Aorta (tissue), 5 donors: ENCODE measurements at regions of chr21 and their contacts with region 1.

Region 1: DNA sequence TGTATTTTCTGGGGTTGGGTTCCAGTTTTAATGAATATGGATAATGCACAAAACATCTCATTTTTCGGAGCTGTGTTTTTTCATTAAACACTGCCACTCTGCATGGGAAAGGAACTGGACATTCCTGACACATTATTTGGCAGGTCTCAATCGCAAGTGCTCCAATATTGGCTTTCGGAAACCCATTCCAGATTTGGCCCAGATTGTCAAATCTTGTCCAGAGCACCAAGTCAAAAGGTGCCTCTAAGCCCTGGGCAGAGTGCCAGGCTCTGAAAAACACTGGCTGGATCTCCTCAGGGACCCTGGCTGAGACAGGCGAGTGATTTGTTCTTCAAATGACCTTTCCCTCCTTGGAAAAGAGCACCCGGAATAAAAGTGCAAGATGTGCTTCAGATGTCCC is 68.4 kb upstream of the MRPS6 start:
- DNase-seq: peak in 1 of 2 donors; percentile 66
- ATAC-seq: peak; percentile 61
- H3K4me3 ChIP-seq: no peak overlapping the region
- H3K27ac ChIP-seq: peak overlapping the region in 1 of 2 donors; percentile 48
- H3K4me1 ChIP-seq: no peaks in the 10 kb centered on the region
- H3K27me3 ChIP-seq: no peaks in the 10 kb centered on the region

Region 2: GRCh38 chr21:33858670-33859372 is 146.2 kb before region 1 on chr21:
- intact Hi-C with region 1: no loop called
- DNase-seq: peak; percentile 57 to 73
- ATAC-seq: no peak
- H3K4me3 ChIP-seq: no peak overlapping the region
- H3K27ac ChIP-seq: peak overlapping the region in 1 of 2 donors; percentile 18
- H3K4me1 ChIP-seq: no peaks in the 10 kb centered on the region
- H3K27me3 ChIP-seq: no peaks in the 10 kb centered on the region

Region 3: GRCh38 chr21:33976082-33977016 is 28.6 kb before region 1 on chr21:
- intact Hi-C with region 1: loop called in 1 of 2 experiments (anchors 1 kb)
- DNase-seq: peak in 1 of 2 donors; percentile 73
- ATAC-seq: peak; percentile 81
- H3K4me3 ChIP-seq: no peak overlapping the region
- H3K27ac ChIP-seq: peak overlapping the region; percentile 49 to 52
- H3K4me1 ChIP-seq: peaks cover 0 to 14% of the 10 kb centered on the region in 2 donors
- H3K27me3 ChIP-seq: no peaks in the 10 kb centered on the region

Region 4: DNA sequence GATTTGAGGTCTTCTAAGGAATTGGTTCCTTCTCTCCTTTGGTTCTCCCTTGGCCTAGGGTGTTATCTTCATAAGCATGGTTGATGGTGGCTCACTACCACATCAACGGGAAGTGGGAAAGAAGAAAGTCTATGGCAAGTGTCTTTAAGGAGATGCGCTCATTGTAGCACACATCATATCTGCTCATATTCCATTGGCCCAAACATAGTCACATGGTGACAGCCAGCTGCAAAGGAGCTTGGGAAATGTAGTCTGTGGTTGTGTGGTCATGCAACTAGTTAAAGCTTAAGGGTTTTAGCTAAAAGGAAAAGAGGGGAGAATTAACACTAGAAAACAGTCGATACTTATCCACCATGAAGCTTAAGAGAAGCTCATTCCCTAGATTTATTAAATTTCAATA is 57.0 kb after region 1 on chr21:
- intact Hi-C with region 1: loop called in 1 of 2 experiments (anchors 10 kb)
- DNase-seq: no peak
- ATAC-seq: no peak
- H3K4me3 ChIP-seq: no peak overlapping the region
- H3K27ac ChIP-seq: no peak overlapping the region
- H3K4me1 ChIP-seq: no peaks in the 10 kb centered on the region
- H3K27me3 ChIP-seq: no peaks in the 10 kb centered on the region